CD4-positive, alpha-beta T cell (primary cell): ENCODE measurements at regions of chr6 and their contacts with region 1.

Region 1: DNA sequence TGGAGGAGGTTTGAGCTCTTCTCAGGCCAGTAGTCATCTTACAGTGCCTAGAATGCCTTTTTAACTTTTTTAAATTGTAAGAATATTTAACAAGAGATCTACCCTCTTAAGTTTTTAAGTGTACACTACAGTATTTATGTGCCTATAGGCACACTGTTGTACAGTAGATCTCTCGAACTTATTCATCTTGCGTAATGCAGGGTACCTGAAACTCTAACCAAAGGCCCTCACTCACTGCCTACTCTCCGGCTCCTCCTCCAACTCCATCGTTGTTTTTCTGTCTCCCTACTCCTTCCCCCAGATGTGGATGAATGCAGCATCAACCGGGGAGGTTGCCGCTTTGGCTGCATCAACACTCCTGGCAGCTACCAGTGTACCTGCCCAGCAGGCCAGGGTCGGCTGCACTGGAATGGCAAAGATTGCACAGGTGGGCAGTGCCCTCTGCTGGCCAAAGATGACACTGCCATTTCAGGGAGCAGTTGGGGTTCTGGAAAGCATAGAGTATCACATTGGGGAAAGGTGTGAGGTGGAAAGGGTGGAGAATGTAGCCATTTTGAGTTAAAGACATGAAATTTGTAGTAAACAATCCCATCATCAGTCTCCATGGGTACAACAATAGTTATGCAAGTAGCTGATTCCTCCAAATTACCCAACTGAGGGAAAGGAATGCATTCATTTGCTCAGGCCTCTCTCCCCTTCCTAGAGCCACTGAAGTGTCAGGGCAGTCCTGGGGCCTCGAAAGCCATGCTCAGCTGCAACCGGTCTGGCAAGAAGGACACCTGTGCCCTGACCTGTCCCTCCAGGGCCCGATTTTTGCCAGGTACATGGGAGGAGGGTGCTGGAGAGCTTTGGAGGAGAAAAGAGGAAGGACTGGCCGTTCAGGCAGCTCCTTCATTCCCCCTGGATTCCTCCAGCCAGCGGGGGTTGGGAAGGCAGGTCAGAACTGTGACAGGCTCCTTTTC is 18.4 kb upstream of the ZNF76 start:
- DNase-seq: peak; percentile 58 to 81 (median 70)
- ATAC-seq: peak; percentile 93
- H3K4me3 ChIP-seq: no peak overlapping the region
- H3K4me3 Mint-ChIP-seq: no peak overlapping the region
- H3K27ac ChIP-seq: no peak overlapping the region
- H3K27ac Mint-ChIP-seq: no peak overlapping the region
- H3K4me1 ChIP-seq: peaks cover 6% of the 10 kb centered on the region
- H3K4me1 Mint-ChIP-seq: peaks cover 4% of the 10 kb centered on the region
- H3K27me3 ChIP-seq: no peaks in the 10 kb centered on the region
- H3K27me3 Mint-ChIP-seq: no peaks in the 10 kb centered on the region
- CTCF ChIP-seq: peak; percentile 94

Region 2: DNA sequence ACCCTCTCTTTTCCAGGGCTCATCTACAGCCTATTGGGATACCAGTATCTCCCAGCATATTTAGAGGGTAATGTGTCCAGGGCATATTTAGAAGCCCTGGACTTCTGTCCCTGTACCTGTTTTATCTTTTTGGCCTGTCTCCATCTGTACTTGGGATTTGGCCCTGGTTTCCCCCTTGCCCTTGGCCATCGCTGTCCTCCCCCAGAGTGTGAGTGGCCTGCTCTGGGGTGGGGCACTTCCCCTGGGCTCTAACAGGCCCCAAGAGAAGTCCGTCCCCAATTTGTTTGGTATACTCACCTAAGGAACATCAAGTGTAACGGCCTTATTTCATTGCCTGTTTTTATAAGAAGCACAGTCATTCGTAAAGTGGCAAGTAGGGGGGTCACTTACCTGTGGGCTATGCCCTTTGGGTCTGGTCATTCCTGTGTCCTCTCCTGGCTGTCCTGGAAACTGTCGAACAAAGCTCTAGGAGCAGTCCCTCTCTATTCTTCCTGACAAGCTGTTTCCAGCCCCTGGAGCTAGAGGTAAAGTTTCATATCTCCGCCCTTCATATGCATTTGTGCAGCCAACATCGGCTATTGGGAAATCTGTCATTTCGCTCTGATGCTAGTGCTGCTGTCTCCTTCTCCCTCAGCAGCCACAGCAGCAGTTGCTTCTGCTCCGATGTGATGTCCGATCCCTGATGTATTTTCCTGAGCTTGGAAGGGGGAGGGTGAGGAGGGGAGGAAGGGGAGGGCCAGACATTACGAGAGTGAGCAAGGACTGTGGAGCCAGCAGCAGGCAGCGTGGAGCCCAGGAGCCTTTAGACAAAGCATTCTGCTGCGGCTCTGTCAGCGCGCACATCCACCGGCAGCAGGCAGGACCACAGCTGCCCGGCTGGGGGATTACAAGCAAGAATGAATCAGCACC is 183.4 kb before region 1 on chr6:
- CTCF ChIA-PET with region 1: no interaction called
- POLR2A ChIA-PET with region 1: no interaction called
- intact Hi-C with region 1: no loop called
- DNase-seq: no peak
- ATAC-seq: no peak
- H3K4me3 ChIP-seq: no peak overlapping the region
- H3K4me3 Mint-ChIP-seq: no peak overlapping the region
- H3K27ac ChIP-seq: no peak overlapping the region
- H3K27ac Mint-ChIP-seq: no peak overlapping the region
- H3K4me1 ChIP-seq: no peaks in the 10 kb centered on the region
- H3K4me1 Mint-ChIP-seq: peaks cover 7% of the 10 kb centered on the region
- H3K27me3 ChIP-seq: no peaks in the 10 kb centered on the region
- H3K27me3 Mint-ChIP-seq: no peaks in the 10 kb centered on the region
- CTCF ChIP-seq: no peak

Region 3: GRCh38 chr6:35230950-35231349 is 10.2 kb before region 1 on chr6:
- CTCF ChIA-PET with region 1: interaction called, 18 read pairs
- POLR2A ChIA-PET with region 1: no interaction called
- intact Hi-C with region 1: no loop called
- DNase-seq: no peak
- ATAC-seq: no peak
- H3K4me3 ChIP-seq: no peak overlapping the region
- H3K4me3 Mint-ChIP-seq: no peak overlapping the region
- H3K27ac ChIP-seq: no peak overlapping the region
- H3K27ac Mint-ChIP-seq: no peak overlapping the region
- H3K4me1 ChIP-seq: no peaks in the 10 kb centered on the region
- H3K4me1 Mint-ChIP-seq: no peaks in the 10 kb centered on the region
- H3K27me3 ChIP-seq: no peaks in the 10 kb centered on the region
- H3K27me3 Mint-ChIP-seq: no peaks in the 10 kb centered on the region
- CTCF ChIP-seq: no peak